Posterior cingulate gyrus (tissue), 11 donors: ENCODE measurements at regions of chr6 and their contacts with region 1.

Region 1: GRCh38 chr6:34154668-34155447 is 9.0 kb upstream of the GRM4 start:
- DNase-seq: peak; percentile 33 to 96 (median 62)

Region 2: GRCh38 chr6:33585403-33586107 is 569.3 kb before region 1 on chr6:
- intact Hi-C with region 1: loop called (anchors 2 kb)
- DNase-seq: peak; percentile 57 to 96 (median 83)

Region 3: DNA sequence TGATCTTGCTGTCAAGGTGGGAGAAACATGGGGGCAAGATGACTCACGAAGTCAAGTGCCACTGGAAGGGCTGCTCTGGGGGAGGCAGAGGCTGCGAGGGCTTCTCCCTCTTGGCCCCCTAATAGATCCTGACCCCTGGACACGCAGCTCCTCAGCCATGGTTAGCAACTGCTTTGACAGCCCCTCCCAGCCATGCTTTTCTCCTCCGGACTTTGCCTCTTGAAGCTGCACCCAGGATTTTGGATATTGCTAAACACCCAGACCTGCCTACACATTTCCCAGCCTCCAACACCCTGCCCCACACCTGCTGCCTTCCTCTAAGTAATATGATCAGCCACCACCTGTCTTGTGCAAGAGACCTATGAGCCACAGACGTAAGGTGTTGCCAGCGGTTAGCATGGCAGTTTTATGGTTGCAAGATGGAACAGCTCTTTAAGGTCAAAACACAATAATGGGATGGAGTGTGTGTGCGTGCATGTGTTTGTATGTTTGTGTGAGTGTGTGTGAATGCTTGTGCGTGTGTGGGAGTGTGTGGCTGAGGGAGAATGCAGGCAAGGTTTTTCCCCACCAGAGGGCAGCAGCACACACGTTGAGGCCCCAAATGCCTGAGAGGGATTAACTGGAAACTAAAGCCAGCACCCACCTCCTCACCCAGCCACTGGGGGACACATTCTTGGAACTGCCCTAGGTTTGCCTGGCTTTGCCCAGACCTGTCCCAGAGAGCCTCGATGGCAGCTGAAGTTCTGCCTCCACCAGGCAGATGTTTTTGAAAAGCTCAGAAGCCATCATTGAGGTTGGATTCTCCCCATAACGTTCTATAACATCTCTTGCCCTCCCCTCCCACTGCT is 410.6 kb before region 1 on chr6:
- intact Hi-C with region 1: loop called (anchors 10 kb)
- DNase-seq: peak; percentile 53 to 95 (median 82)

Region 4: GRCh38 chr6:33771146-33772081 is 383.4 kb before region 1 on chr6:
- intact Hi-C with region 1: loop called (anchors 2 kb)
- DNase-seq: peak; percentile 41 to 96 (median 63)

Region 5: DNA sequence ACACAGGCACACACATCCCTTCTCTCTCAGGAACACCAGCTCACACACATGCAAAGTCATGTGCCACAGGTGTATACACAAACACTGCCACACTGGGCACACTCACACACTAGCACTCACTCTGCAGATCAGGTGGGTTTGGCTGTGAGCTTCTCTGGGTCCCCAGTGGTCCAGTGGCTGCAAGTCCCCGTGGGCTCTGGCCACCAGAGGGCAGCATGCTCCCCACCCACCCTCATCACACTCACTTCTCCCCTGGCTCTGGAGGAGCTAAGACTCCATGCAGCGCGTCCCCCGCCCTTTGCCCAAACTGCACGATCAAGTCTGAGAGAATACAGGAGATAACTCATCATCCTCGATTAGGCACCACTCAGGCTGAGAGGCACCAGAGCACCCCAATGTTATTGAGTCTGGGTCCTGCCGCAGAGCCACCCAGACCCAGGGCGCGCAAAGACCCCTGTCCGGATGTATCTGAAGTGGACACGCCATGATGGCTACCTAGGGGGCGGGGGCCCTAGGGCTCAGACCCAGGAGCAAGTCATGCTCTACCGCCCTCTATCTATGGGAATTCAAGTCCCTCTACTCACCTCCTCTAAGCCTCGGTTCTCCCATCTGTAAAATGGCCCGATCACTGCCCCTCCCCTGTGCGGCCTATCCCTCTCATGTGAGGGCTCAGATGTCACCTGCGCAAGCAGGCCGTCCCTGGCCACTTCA is 99.5 kb before region 1 on chr6:
- intact Hi-C with region 1: loop called (anchors 1 kb)
- DNase-seq: peak in 8 of 10 donors; percentile 45 to 91 (median 62)

Region 6: DNA sequence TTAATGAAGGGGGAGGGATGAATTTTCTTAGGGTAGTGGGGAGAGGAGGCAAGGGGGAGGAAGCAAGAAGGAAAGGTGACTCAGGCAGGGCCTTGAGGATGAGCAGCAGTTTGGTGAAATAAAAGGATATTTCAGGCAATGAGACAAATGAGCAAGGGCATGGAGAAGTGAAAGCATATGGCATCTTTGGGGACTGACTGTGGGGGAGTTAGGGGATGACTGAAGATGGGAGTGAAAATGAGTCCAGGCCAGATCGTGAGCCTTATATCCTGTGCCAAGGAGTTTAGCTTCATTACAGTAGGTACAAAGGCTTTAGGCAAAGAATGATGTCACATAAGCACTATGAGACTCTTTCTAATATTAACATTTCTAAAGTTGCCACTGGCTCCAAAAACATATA is 489.9 kb after region 1 on chr6:
- intact Hi-C with region 1: no loop called
- DNase-seq: no peak